ENCODE measurements at regions of chr2 and their contacts with region 1.

Region 1: DNA sequence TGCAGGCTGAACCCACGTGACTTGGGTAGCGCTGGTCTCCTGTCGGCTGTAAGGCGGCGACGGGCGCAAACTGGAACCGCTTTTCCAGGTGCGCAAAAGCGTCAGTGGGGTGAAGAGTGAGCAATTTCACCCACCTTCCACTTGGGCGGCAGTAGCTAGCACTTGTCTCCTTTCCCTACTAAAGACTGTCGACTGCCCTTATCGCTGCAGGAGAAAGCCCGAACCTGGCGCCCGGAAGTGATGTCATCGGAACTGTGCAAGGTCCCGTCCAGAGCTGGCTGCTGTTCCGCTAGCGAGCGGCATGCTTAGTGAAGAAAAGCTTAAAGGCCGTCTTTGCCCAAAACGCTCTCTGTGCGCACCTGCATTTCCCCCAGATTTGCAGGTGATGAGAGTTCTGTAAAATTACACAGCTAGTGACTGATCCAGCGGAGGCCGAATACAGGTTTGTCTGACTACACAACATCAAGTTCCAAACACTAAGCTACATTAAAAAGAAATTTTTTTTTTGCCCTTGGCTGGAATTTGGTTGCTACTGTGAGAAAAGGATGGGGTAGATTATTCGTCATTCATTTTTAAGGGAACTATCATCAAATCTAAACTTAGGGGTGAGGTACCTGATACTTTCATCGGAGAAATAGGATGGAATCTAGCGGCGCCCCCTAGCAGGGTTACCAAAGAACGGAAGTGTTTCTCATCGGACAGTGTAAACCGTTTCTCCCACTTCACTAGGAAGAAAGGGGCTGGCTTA is at the start of gene OSGEPL1:
- DNase-seq: peak; percentile 94
- H3K4me3 ChIP-seq: peak within 1 kb of the TSS; percentile 66 to 96 (median 92)
- H3K27ac ChIP-seq: peak within 1 kb of the TSS; percentile 70
- H3K4me1 ChIP-seq: peaks cover 6% of the 10 kb centered on the region
- H3K27me3 ChIP-seq: no peaks in the 10 kb centered on the region
- CTCF ChIP-seq: peak; percentile 26 to 65
- total RNA-seq, gene OSGEPL1: 4.6 to 8.8 TPM

Region 2: GRCh38 chr2:189466660-189467059 is 296.1 kb before region 1 on chr2:
- CTCF ChIA-PET with region 1: no interaction called
- dilution Hi-C with region 1: no loop called
- in situ Hi-C with region 1: no loop called
- intact Hi-C with region 1: no loop called
- DNase-seq: no peak
- H3K4me3 ChIP-seq: no peak overlapping the region
- H3K27ac ChIP-seq: no peak overlapping the region
- H3K4me1 ChIP-seq: no peaks in the 10 kb centered on the region
- H3K27me3 ChIP-seq: no peaks in the 10 kb centered on the region
- CTCF ChIP-seq: peak; percentile 23 to 52

Region 3: DNA sequence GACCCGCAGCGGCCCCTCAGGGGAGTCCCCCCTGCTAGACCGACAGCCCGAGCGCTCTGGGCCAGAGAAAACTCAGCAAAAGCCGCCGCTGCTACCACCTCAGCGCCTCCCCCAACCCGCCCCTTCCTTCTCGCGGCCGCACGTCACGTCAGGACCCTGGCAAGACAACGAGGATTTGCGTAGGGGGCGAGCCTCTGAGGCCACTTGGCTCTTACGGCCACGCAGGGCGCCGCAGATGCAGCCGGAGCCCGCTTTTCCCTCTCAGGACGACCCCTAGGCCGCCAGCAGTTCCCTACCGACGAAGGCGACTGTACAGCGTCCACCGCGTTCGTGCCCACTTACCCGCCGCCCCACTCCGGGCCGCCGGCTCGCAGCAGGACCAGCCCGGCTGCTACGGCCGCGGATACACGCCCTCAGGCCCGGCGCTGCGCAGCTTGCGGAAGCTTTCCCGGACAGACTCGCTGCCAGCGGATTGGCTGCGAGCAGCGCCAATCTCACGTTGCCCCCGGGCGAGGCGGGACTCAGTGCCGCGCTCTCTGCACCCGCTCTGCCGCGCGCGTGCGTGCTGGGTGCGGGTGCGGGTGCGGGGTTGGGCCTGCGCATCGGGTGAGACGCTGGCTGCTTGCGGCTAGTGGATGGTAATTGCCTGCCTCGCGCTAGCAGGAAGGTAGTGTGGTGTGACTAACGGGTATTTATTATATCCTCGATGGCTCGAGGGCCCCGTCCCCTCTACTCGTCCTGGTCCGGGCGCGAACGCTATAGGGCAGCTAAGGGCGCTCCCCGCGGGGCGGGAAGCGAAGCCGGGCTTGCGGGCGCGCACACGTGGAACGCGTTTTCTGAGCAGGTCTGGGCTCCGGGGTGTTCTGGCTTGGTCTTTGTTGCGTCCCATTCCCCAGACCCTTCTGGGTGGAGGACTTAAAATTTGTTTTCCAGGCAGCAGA is 21.5 kb after region 1 on chr2 and contains the starts of genes ORMDL1 and PMS1:
- CTCF ChIA-PET with region 1: no interaction called
- dilution Hi-C with region 1: no loop called
- in situ Hi-C with region 1: no loop called
- intact Hi-C with region 1: loop called (anchors 1 kb)
- DNase-seq: peak; percentile 96
- H3K4me3 ChIP-seq: peak within 1 kb of the TSS; percentile 77 to 93 (median 84)
- H3K27ac ChIP-seq: peak within 1 kb of the TSS; percentile 72
- H3K4me1 ChIP-seq: peaks cover 17% of the 10 kb centered on the region
- H3K27me3 ChIP-seq: no peaks in the 10 kb centered on the region
- CTCF ChIP-seq: no peak
- total RNA-seq, gene ORMDL1: 44.3 to 56.2 TPM
- total RNA-seq, gene PMS1: 21.2 to 26.3 TPM

Region 4: GRCh38 chr2:190197143-190197720 is 434.5 kb after region 1 on chr2:
- CTCF ChIA-PET with region 1: no interaction called
- dilution Hi-C with region 1: no loop called
- in situ Hi-C with region 1: no loop called
- intact Hi-C with region 1: no loop called
- DNase-seq: no peak
- H3K4me3 ChIP-seq: no peak overlapping the region
- H3K27ac ChIP-seq: no peak overlapping the region
- H3K4me1 ChIP-seq: no peaks in the 10 kb centered on the region
- H3K27me3 ChIP-seq: no peaks in the 10 kb centered on the region
- CTCF ChIP-seq: no peak

Measured in mammary epithelial cell (primary cell).